HepG2 (cell line): ENCODE measurements at regions of chrX and their contacts with region 1.

Region 1: DNA sequence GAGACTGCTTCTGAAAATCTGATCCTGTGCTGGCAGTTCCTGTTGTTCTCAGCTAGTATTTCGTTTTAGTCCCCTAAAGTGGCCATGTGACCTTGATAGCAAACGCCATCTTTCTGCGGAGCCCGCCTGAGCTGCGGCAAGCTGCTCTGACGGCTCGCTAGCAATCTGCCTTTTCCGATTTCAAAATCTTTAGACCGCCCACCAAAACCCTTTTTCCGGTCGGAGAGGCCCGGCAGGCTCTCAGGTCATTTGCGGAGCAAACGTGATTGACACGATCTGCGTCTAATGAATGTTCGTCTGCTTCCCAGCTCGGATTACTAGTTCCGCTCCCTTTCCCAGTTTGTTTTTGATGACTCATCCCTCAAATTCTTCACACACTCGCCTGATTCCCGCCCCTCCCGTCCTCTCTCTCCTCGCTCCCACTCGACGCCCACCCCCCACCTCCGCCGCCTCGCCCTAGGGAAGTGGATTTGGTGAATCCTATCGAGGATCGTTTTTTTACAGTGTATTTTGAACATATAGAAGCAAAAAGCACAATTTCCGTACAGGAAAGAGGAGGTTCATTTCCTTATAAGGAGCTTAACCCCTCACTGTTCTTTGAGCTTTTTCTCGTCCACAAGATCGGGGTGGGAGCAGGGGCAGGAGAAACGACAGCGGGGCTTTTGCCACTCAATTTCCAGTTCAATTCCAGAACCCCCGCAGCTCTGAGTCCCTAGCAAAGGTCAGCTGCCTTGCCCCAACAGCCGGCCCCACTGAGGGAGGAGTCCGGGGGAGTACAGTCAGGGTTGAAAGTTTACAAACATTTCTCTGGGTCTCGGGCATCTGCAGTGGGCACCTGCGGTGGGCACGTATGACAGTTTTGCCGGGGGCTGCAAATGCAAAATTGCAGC is 37.5 kb downstream of the NLGN3 start:
- DNase-seq: peak; percentile 95
- ATAC-seq: peak; percentile 82
- H3K4me3 ChIP-seq: peak overlapping the region; percentile 36 to 62 (median 49)
- H3K27ac ChIP-seq: peak overlapping the region; percentile 100
- H3K4me1 ChIP-seq: peaks cover 62% of the 10 kb centered on the region
- H3K27me3 ChIP-seq: no peaks in the 10 kb centered on the region
- CTCF ChIP-seq: no peak
- EP300 ChIP-seq: no peak
- POLR2A ChIP-seq: peak; percentile 68 to 75
- RAD21 ChIP-seq: no peak

Region 2: DNA sequence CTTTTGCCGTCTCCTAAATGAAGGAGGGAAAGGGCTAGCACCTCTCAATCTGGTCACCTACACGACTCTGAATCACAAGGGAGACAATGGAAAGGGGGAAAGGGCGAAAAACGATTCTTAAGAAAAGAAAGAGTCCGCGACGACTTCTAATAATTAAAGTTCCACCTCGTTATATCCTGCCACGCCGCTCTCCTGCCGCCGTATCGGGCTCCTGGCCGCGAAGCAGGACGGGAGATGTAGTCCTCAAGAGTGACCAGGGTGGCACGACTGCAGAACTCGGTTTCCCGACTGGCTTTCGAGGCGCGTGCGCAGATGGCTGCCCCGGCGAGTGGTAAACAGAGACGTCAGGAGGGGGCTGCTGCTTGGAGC is 86.6 kb before region 1 on chrX and contains the start of gene FOXO4:
- CTCF ChIA-PET with region 1: no interaction called
- POLR2A ChIA-PET with region 1: no interaction called
- in situ Hi-C with region 1: no loop called
- intact Hi-C with region 1: loop called (anchors 5 kb)
- DNase-seq: peak; percentile 75
- ATAC-seq: peak; percentile 93
- H3K4me3 ChIP-seq: peak within 1 kb of the TSS; percentile 66 to 75 (median 73)
- H3K27ac ChIP-seq: peak within 1 kb of the TSS; percentile 45
- H3K4me1 ChIP-seq: peaks cover 29% of the 10 kb centered on the region
- H3K27me3 ChIP-seq: no peaks in the 10 kb centered on the region; a peak in 1 of 5 replicates
- CTCF ChIP-seq: no peak
- EP300 ChIP-seq: no peak
- POLR2A ChIP-seq: peak in 1 of 2 experiments; percentile 56; a peak in 2 of 4 replicates
- RAD21 ChIP-seq: no peak
- total RNA-seq, gene FOXO4: 4.6 and 5.7 TPM in 2 replicates

Region 3: DNA sequence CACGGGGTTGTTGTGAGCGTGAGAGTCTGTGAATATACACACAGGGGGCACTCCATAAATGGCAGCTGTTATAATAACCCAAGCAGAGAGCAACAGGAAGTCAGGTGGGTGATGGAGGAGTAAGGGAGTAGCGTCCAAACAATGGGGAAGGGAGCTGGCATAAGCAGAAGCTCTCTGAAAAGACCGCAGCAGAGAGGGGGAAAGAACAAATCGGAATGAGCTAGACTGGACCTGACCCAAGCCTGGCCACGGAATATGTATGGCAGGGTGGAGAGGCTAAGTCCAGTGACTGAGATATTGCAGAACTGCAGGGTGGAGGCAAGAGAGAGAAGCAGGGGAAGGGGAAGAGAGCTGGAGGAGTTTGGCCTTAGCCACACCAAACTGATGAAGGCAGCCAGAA is 34.3 kb after region 1 on chrX:
- CTCF ChIA-PET with region 1: no interaction called
- POLR2A ChIA-PET with region 1: interaction called, 68 read pairs
- in situ Hi-C with region 1: no loop called
- intact Hi-C with region 1: loop called (anchors 5 kb)
- DNase-seq: peak; percentile 42
- ATAC-seq: no peak
- H3K4me3 ChIP-seq: peak overlapping the region; percentile 76 to 79 (median 78)
- H3K27ac ChIP-seq: peak overlapping the region; percentile 91
- H3K4me1 ChIP-seq: peaks cover 51% of the 10 kb centered on the region
- H3K27me3 ChIP-seq: no peaks in the 10 kb centered on the region; a peak in 1 of 5 replicates
- CTCF ChIP-seq: no peak
- EP300 ChIP-seq: no peak
- POLR2A ChIP-seq: peak in 1 of 2 experiments; percentile 36; a peak in 1 of 4 replicates
- RAD21 ChIP-seq: no peak

Region 4: GRCh38 chrX:71254092-71254941 is 72.2 kb after region 1 on chrX and contains the start of gene ZMYM3:
- CTCF ChIA-PET with region 1: no interaction called
- POLR2A ChIA-PET with region 1: interaction called, 13 read pairs
- in situ Hi-C with region 1: no loop called
- intact Hi-C with region 1: loop called (anchors 5 kb)
- DNase-seq: peak; percentile 67
- ATAC-seq: peak; percentile 94
- H3K4me3 ChIP-seq: peak within 1 kb of the TSS; percentile 76 to 88 (median 83)
- H3K27ac ChIP-seq: peak within 1 kb of the TSS; percentile 78
- H3K4me1 ChIP-seq: peaks cover 35% of the 10 kb centered on the region
- H3K27me3 ChIP-seq: no peaks in the 10 kb centered on the region; a peak in 1 of 5 replicates
- CTCF ChIP-seq: no peak
- EP300 ChIP-seq: no peak
- POLR2A ChIP-seq: peak in 1 of 2 experiments; percentile 48; a peak in 1 of 4 replicates
- RAD21 ChIP-seq: no peak; the same call in 1 of the 2 replicates
- total RNA-seq, gene ZMYM3: 26.4 and 34.7 TPM in 2 replicates

Region 5: DNA sequence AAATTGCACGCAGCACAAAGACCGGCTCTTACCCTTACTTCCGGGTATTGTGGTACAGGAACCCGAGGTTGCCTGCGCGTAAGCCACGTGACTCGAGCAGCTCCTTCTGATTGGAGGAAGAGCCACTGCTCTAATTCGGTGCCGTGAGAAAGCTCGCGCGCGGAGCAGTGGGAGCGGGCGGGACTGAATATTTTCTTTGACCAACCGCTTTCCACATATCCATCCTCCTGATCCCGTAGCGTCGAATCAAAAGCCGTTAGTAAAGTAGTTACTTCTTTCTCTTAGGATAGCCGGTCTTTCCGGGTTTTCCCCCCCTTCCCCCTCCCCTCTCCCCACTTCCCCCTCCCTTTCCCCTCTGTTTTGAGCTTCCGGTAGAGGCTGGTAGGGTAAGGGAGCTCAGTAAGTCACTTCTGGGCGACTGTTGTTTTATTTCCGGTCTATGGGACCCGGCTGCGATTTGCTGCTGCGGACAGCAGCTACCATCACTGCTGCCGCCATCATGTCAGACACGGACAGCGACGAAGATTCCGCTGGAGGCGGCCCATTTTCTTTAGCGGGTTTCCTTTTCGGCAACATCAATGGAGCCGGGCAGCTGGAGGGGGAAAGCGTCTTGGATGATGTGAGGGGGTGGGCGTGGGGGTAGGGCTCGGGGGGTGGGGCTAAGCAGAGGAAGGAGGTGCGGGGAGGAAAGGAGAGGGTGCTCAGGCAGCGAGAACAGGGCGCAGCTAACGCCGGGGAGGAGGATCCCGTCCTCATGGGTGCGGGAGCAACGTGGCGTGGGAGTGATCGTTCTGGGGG is 183.9 kb after region 1 on chrX and contains the start of gene TAF1:
- CTCF ChIA-PET with region 1: no interaction called
- POLR2A ChIA-PET with region 1: interaction called, 25 read pairs
- in situ Hi-C with region 1: no loop called
- intact Hi-C with region 1: no loop called
- DNase-seq: peak; percentile 96
- ATAC-seq: peak; percentile 95
- H3K4me3 ChIP-seq: peak within 1 kb of the TSS; percentile 76 to 88 (median 87)
- H3K27ac ChIP-seq: peak within 1 kb of the TSS; percentile 92
- H3K4me1 ChIP-seq: peaks cover 24% of the 10 kb centered on the region
- H3K27me3 ChIP-seq: no peaks in the 10 kb centered on the region; a peak in 1 of 5 replicates
- CTCF ChIP-seq: no peak
- EP300 ChIP-seq: no peak
- POLR2A ChIP-seq: peak; percentile 62 to 81; a peak in 3 of 4 replicates
- RAD21 ChIP-seq: no peak
- total RNA-seq, gene TAF1: 17.7 and 20.2 TPM in 2 replicates